Gastrocnemius medialis (tissue), 4 donors: ENCODE measurements at regions of chr4 and their contacts with region 1.

Region 1: GRCh38 chr4:88284439-88285234 is at the start of gene PPM1K:
- DNase-seq: peak; percentile 98 to 99
- ATAC-seq: peak; percentile 92 to 93
- H3K4me3 ChIP-seq: peak within 1 kb of the TSS; percentile 81 to 98 (median 90)
- H3K27ac ChIP-seq: peak within 1 kb of the TSS; percentile 93 to 99 (median 98)
- H3K4me1 ChIP-seq: peaks cover 25 to 41% of the 10 kb centered on the region in 2 donors
- H3K27me3 ChIP-seq: no peaks in the 10 kb centered on the region
- CTCF ChIP-seq: peak in 1 of 5 experiments; percentile 21
- POLR2A ChIP-seq: peak; percentile 74 to 93
- total RNA-seq, gene PPM1K: 3.3 to 9.5 (median 6.9) TPM

Region 2: GRCh38 chr4:86934771-86935565 is 1349.7 kb before region 1 on chr4 and contains the start of gene AFF1:
- in situ Hi-C with region 1: no loop called
- intact Hi-C with region 1: loop called (anchors 5 kb)
- DNase-seq: peak; percentile 92 to 96
- ATAC-seq: peak; percentile 70 to 79
- H3K4me3 ChIP-seq: peak within 1 kb of the TSS; percentile 79 to 97 (median 82)
- H3K27ac ChIP-seq: peak within 1 kb of the TSS; percentile 93 to 99 (median 96)
- H3K4me1 ChIP-seq: peaks cover 29 to 47% of the 10 kb centered on the region in 2 donors
- H3K27me3 ChIP-seq: no peaks in the 10 kb centered on the region
- CTCF ChIP-seq: peak; percentile 7 to 87 (median 58)
- POLR2A ChIP-seq: peak; percentile 97
- total RNA-seq, gene AFF1: 142 to 265 (median 197) TPM

Region 3: DNA sequence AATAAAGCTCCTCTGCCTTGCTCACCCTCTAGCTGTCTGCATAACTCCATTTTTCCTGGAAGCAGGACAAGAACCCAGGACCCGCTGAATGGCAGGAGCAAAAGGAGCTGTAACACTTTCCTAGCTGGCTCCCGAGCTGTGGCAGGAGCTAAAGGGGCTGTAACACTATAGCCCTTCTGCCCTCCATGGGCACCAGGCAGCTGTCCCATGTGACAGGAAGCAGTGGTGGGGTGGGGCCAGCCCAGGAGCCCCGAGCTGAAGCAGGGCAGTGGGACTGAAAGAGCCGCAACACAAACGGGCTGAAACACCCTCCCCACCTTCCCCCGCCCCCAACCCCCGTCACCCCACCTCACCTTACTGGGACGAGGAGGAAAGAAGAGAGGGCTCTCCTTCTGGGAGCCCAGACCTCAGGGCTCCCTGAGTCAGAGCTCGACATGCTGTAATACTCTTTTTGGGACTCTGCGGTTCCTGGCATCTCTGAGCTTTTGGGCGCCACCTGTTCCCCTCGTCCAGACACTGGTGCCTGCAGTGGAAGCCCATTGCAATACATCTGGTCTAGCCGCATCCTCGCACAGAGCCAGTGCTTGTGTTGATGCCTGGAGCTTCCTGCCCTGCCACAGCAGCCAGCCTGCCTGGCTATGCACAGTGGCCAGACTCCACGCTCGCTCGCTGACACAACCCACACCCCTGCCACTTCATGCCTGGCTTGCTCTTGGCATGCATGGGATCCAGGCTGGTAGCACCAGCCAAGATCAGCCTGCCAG is 39.6 kb before region 1 on chr4:
- in situ Hi-C with region 1: no loop called
- intact Hi-C with region 1: loop called (anchors 1 kb)
- DNase-seq: peak; percentile 70 to 93
- ATAC-seq: peak; percentile 78 to 85
- H3K4me3 ChIP-seq: peak overlapping the region; percentile 2 to 42 (median 36)
- H3K27ac ChIP-seq: peak overlapping the region; percentile 81 to 89 (median 86)
- H3K4me1 ChIP-seq: peaks cover 32 to 39% of the 10 kb centered on the region in 2 donors
- H3K27me3 ChIP-seq: no peaks in the 10 kb centered on the region
- CTCF ChIP-seq: no peak
- POLR2A ChIP-seq: no peak

Region 4: DNA sequence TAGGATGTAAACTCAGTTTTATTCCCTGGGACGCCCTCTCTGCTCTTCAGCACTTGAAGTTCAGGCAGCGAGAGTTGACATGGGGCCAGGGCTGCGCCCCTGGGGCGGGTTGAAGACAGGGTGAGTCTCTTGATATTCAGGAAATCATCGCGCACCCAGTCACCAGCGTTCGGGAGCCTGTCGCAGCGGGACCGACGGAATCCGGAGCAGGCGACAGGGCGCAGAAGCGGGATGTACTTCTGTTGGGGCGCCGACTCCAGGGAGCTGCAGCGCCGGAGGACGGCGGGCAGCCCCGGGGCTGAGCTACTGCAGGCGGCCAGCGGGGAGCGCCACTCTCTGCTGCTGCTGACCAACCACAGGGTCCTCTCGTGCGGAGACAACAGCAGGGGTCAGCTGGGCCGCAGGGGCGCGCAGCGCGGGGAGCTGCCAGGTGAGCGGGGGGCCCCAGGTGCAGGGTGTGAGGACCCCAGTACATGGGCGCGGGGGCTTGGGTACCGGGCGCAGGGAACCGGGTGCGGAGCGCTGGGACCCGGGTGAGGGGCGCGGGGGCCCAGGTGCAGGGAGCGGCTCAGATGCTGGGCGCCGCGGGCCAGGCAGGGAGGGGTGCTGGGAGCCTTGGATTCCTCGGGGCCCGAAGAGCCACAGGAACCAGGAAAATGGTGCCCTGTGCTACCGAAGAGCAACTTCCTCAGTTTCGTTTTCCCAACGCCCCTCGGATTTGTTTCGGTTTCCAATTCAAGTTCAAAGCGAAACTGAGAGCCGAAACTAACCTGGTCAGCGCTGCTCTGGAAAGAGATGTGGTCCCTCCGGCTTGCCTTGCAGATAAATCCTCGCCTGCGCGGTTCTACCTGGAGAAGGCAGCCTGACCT is 94.3 kb after region 1 on chr4 and contains the start of gene HERC6:
- in situ Hi-C with region 1: no loop called
- intact Hi-C with region 1: loop called (anchors 2 kb)
- DNase-seq: peak; percentile 25 to 59
- ATAC-seq: peak; percentile 90 to 92
- H3K4me3 ChIP-seq: peak within 1 kb of the TSS; percentile 81 to 99 (median 96)
- H3K27ac ChIP-seq: peak within 1 kb of the TSS; percentile 71 to 88 (median 81)
- H3K4me1 ChIP-seq: no peaks in the 10 kb centered on the region
- H3K27me3 ChIP-seq: no peaks in the 10 kb centered on the region
- CTCF ChIP-seq: peak; percentile 47 to 77 (median 60)
- POLR2A ChIP-seq: no peak
- total RNA-seq, gene HERC6: 0.42 to 1.6 (median 1.0) TPM

Region 5: DNA sequence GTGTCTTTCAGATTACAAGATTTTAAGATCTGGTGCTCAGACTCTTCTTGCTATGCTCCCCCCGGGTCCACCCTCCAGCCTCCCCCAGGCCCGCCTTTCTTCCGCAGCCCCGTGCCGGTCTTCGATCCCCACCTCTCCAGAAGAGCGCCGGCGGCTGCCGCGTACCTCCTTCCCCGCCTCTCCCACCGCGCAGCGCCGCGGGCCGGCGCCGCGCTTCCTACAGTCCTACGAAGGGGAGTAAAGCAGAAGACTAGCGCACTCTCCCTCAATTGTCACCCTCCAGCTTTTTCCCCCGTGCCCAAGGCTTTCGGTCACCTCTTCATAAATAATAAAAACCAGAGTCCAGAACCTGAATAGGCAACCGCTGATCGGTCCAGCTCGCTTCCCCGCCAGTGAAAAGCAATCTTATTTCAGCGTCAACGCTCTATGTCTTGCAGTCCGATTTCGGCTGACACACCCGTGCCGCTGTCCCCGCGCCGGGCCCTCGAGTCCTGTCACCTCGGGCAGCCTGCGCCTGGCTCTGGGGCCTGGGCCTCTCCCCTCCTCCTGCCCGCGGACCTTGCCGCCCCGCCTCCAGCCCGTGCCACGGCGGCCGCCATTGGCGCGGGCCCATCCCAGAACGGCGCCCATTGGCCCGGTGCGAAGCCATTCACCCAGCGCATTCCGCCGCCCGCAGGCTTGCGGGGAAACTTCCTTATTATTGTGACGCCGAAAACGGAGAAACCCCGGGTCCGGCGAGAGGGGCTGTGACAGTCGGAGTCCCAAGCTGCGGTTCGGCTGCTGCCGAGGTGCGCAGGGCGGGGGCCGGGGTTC is 307.4 kb after region 1 on chr4 and contains the start of gene HERC3:
- in situ Hi-C with region 1: no loop called
- intact Hi-C with region 1: loop called (anchors 5 kb)
- DNase-seq: peak; percentile 87 to 92
- ATAC-seq: peak; percentile 86 to 91
- H3K4me3 ChIP-seq: peak within 1 kb of the TSS; percentile 72 to 91 (median 82)
- H3K27ac ChIP-seq: peak within 1 kb of the TSS; percentile 91 to 95 (median 92)
- H3K4me1 ChIP-seq: peaks cover 18 to 26% of the 10 kb centered on the region in 2 donors
- H3K27me3 ChIP-seq: no peaks in the 10 kb centered on the region
- CTCF ChIP-seq: peak in 2 of 5 experiments; percentile 26 to 34
- POLR2A ChIP-seq: peak; percentile 59 to 68
- total RNA-seq, gene HERC3: 16.2 to 32.3 (median 21.9) TPM

Region 6: DNA sequence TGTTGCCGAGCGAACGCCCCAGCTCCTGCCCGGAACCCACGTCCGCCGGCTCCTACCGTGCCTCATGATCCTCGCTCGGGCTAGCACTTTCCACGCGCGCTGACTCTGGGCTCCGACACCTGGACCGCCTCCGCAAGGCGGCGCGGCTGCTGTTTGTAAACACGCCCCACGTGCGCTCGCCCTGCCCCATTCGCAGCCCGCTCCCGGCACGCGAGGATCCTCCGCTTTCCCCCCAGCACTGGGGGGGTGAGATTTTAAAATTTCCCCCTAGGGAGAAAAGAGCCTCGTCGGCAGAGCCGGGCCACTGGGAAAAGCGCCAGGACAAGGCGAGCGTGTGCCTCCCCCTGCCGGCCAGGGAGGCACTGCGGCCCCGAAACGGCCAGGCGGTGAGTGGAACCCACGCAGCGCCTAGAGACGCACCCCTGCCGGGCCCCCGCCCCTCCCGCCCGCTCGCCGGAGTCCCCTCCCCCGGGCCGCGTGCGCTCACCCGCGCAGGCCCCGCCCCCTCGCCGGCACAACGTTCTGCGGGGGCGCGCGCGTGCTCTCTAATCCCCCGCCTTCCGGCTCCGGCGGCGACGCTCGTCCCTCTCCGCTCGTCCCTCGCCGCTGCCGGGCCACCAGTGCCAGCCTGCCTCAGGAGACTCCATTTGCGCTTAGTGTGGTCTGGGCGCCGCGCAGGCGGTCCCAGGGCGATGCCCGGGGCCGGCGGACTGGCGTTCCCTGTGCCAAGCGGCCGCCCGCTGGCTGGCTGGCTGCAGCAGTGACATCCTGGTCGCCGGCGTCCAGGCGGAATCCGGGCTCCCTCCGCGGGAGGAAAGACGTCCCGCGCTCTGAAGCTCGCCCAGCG is 826.6 kb after region 1 on chr4 and contains the start of gene TIGD2:
- in situ Hi-C with region 1: no loop called
- intact Hi-C with region 1: loop called (anchors 5 kb)
- DNase-seq: peak; percentile 78 to 83
- ATAC-seq: peak; percentile 87 to 91
- H3K4me3 ChIP-seq: peak within 1 kb of the TSS; percentile 71 to 95 (median 88)
- H3K27ac ChIP-seq: peak within 1 kb of the TSS; percentile 87 to 94 (median 92)
- H3K4me1 ChIP-seq: peaks cover 9 to 13% of the 10 kb centered on the region in 2 donors
- H3K27me3 ChIP-seq: no peaks in the 10 kb centered on the region
- CTCF ChIP-seq: peak; percentile 82 to 88 (median 87)
- POLR2A ChIP-seq: peak; percentile 75 to 76
- total RNA-seq, gene TIGD2: 1.7 to 2.8 (median 2.4) TPM